Dorsolateral prefrontal cortex (tissue), 120 donors: ENCODE measurements at regions of chr6 and their contacts with region 1.

Region 1: DNA sequence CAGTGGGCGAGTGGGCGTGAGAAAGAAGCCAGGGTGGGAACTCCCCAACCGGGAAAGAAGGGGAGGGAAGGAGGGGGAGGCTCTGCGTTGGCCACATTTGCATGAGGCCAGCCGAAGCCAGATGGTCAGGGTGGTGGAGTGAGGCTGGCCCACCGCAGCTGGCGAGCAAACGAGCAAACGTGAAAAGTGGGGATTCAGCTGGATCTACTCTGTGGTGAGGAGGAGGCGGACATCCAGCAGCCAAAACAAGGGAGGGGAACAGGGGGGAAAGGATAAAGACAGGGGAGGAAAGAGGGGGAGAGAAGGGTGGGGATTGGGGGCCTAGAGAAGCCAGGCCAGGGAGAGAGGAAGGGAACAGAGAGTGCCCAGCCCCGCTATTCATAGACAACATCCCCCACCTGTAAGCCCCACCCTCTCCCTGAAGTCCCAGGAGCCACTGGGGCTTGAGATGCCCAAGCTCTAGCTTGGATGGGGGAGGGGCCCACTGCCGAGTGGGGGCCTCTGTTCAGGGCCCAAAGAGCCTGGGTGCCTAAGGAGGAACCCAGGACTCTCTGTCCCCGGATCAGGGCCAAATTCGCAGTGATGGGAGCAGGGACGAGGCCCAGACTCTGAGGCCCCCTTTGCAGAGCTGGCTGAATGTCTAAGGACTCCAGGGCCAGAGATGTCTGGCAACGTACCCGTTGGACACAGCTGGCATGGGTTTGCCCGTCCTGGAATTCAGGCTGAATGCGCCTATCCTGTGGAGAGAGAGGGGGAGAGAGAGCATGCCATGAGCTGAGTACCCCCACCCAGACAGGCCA is 45.1 kb downstream of the CPNE5 start:
- DNase-seq: peak in 8 of 10 donors; percentile 26 to 70 (median 58)
- H3K4me3 ChIP-seq: no peak overlapping the region
- H3K27ac ChIP-seq: peak overlapping the region in 55 of 59 donors; percentile 10 to 90 (median 73)
- H3K27me3 ChIP-seq: no peaks in the 10 kb centered on the region
- CTCF ChIP-seq: no peak

Region 2: DNA sequence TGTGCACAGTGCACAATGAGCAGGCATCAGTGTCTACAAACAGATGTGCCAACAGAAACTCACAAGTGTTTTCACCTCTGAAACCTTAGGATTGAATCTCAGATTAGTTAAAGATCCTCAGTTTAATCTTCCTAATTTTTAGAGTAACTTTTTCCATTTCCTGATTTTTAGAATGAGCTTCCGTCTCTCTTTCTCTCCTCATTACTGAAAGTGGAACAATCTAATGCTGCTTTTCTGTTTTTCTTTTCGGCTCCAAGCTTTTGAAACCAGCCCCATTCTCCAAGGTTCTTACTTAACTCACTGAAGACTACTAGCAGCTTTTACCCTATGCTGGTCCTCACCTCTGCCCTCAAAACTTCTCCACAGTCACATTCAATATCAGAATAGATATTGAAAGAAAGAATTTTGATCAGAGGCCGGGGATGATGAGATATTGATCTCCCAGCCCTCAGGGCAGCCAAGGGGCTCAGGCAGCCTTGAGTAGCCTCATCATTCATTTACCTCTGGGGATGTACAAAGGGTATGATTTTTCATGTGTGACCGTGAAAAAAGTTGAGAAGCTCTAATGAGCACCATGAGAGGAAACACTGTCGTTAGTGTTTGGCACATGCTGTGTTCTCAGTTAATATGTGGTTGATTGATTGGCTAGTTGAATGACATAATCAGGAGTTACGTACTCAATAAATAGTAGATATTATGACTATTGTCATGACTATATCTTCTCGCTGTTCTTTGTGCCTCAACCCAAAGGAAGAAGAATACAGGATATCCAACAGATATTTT is 234.9 kb before region 1 on chr6:
- intact Hi-C with region 1: no loop called
- DNase-seq: no peak
- H3K4me3 ChIP-seq: no peak overlapping the region
- H3K27ac ChIP-seq: no peak overlapping the region
- H3K27me3 ChIP-seq: no peaks in the 10 kb centered on the region
- CTCF ChIP-seq: no peak

Region 3: GRCh38 chr6:36839749-36840431 is 45.8 kb after region 1 on chr6:
- intact Hi-C with region 1: loop called in 1 of 2 experiments (anchors 5 kb)
- DNase-seq: peak in 5 of 10 donors; percentile 38 to 73 (median 55)
- H3K4me3 ChIP-seq: peak overlapping the region; percentile 31 to 73 (median 60)
- H3K27ac ChIP-seq: peak overlapping the region in 53 of 59 donors; percentile 11 to 92 (median 70)
- H3K27me3 ChIP-seq: peaks cover 0 to 4% (median 0%) of the 10 kb centered on the region in 45 donors
- CTCF ChIP-seq: peak in 21 of 56 donors; percentile 9 to 41 (median 17)